ENCODE measurements at regions of chr12 and their contacts with region 1.

Region 1: DNA sequence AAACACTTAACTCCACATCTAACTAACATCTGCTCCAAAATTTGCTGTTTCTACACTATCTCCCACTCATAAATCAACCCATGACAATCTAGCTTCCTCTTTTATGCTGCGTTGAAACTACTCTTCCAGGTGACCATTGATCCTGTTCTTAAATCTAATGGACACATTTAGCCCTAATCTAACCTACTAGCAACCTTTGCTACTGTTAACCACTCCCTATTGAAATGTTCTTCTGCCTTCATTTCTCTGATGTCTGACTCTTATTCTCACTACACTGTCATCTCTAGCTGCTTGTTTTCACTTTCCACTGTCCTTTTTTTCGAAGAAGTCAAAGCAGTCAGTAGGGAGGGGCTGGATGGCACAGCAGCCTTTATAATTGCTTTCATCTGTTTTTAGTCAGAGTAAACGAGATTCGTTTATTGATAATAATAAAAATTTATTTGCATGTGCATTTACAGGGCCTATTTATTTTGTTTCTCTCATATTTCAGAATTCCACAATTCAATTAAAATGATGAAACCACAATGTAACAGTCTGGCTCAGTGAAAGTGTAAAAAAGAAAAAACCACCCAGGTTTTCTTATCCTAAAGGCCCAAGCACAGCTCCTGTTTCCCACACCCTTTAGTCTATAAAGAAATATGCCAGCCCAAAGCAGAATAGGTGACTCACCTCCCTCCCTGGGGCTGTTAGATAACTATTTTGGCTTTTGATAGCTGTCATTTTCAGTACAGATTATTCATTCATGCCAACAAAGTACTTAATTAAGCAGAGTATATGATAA is 44.9 kb downstream of the ATP2B1 start:
- DNase-seq: peak in 2 of 9 experiments; percentile 17 to 24
- ATAC-seq: peak; percentile 63
- H3K4me3 ChIP-seq: no peak overlapping the region
- H3K4me3 Mint-ChIP-seq: peak overlapping the region; percentile 0
- H3K27ac ChIP-seq: no peak overlapping the region
- H3K27ac Mint-ChIP-seq: peak overlapping the region; percentile 3
- H3K4me1 ChIP-seq: peaks cover 41% of the 10 kb centered on the region
- H3K4me1 Mint-ChIP-seq: peaks cover 72% of the 10 kb centered on the region
- H3K27me3 ChIP-seq: no peaks in the 10 kb centered on the region
- H3K27me3 Mint-ChIP-seq: no peaks in the 10 kb centered on the region
- CTCF ChIP-seq: no peak

Region 2: GRCh38 chr12:89651192-89651591 is 12.6 kb before region 1 on chr12:
- CTCF ChIA-PET with region 1: no interaction called
- POLR2A ChIA-PET with region 1: interaction called, 3 read pairs
- intact Hi-C with region 1: loop called in 1 of 2 experiments (anchors 1 kb)
- DNase-seq: no peak
- ATAC-seq: no peak
- H3K4me3 ChIP-seq: no peak overlapping the region
- H3K4me3 Mint-ChIP-seq: no peak overlapping the region
- H3K27ac ChIP-seq: no peak overlapping the region
- H3K27ac Mint-ChIP-seq: no peak overlapping the region
- H3K4me1 ChIP-seq: peaks cover 4% of the 10 kb centered on the region
- H3K4me1 Mint-ChIP-seq: peaks cover 54% of the 10 kb centered on the region
- H3K27me3 ChIP-seq: no peaks in the 10 kb centered on the region
- H3K27me3 Mint-ChIP-seq: no peaks in the 10 kb centered on the region
- CTCF ChIP-seq: no peak

Region 3: DNA sequence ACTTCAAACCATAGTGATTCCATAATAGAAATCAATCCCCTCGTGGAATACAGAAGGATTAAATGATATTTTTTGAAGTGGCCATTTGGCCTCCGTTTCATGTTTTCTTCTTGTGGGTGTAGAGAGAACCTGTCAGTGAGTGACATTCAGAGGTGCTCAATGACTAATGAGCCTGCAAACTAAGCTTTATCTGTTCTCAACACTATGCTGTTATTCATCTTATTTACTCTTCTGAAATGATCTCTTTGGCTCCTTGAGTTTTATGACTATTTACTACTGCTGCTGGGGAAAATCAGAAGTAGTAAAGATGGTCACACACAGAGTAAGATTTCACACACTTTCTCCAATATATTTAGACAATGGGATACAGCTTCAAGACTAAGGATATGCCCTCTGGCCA is 14.5 kb after region 1 on chr12:
- CTCF ChIA-PET with region 1: no interaction called
- POLR2A ChIA-PET with region 1: interaction called, 3 read pairs
- intact Hi-C with region 1: loop called in 1 of 2 experiments (anchors 2 kb)
- DNase-seq: no peak
- ATAC-seq: no peak
- H3K4me3 ChIP-seq: no peak overlapping the region
- H3K4me3 Mint-ChIP-seq: no peak overlapping the region
- H3K27ac ChIP-seq: no peak overlapping the region
- H3K27ac Mint-ChIP-seq: no peak overlapping the region
- H3K4me1 ChIP-seq: peaks cover 23% of the 10 kb centered on the region
- H3K4me1 Mint-ChIP-seq: peaks cover 64% of the 10 kb centered on the region
- H3K27me3 ChIP-seq: no peaks in the 10 kb centered on the region
- H3K27me3 Mint-ChIP-seq: no peaks in the 10 kb centered on the region
- CTCF ChIP-seq: no peak

Region 4: GRCh38 chr12:89762498-89763188 is 98.9 kb after region 1 on chr12:
- CTCF ChIA-PET with region 1: no interaction called
- POLR2A ChIA-PET with region 1: no interaction called
- intact Hi-C with region 1: loop called in 1 of 2 experiments (anchors 5 kb)
- DNase-seq: peak in 2 of 9 experiments; percentile 41 to 66
- ATAC-seq: peak; percentile 48
- H3K4me3 ChIP-seq: no peak overlapping the region
- H3K4me3 Mint-ChIP-seq: no peak overlapping the region
- H3K27ac ChIP-seq: no peak overlapping the region
- H3K27ac Mint-ChIP-seq: no peak overlapping the region
- H3K4me1 ChIP-seq: peaks cover 23% of the 10 kb centered on the region
- H3K4me1 Mint-ChIP-seq: peaks cover 53% of the 10 kb centered on the region
- H3K27me3 ChIP-seq: no peaks in the 10 kb centered on the region
- H3K27me3 Mint-ChIP-seq: no peaks in the 10 kb centered on the region
- CTCF ChIP-seq: no peak

Measured in CD8-positive, alpha-beta T cell (primary cell).